ENCODE measurements at regions of chr17 and their contacts with region 1.

Region 1: GRCh38 chr17:56297184-56297583 is 143.9 kb downstream of the ANKFN1 start:
- DNase-seq: peak; percentile 64
- H3K4me3 ChIP-seq: no peak overlapping the region
- H3K27ac ChIP-seq: no peak overlapping the region
- H3K4me1 ChIP-seq: peaks cover 0 to 4% (median under 1%) of the 10 kb centered on the region in 4 donors
- H3K27me3 ChIP-seq: peaks cover 0 to 3% (median 0%) of the 10 kb centered on the region in 4 donors
- CTCF ChIP-seq: no peak
- EP300 ChIP-seq: no peak
- POLR2A ChIP-seq: no peak

Region 2: DNA sequence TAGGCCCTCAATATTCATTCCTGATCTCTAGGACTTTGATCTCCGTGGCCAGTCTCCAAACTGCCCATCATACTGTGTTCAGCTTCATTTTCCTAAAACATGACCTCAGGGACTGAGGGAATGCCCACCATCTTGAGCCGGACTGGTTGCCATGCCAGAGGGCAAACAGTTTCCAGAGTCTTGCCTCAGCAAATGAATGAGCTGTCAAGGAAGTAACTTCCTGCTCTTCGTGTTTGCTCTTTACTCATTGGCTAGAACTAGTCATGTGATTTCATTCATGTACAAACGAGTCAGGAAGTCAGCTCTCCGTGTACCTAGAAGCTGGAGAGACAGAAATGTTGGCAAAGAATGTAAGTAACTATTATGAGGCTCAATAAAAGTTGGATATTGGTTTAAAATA is 93.8 kb before region 1 on chr17:
- intact Hi-C with region 1: no loop called
- DNase-seq: no peak
- H3K4me3 ChIP-seq: no peak overlapping the region
- H3K27ac ChIP-seq: no peak overlapping the region
- H3K4me1 ChIP-seq: no peaks in the 10 kb centered on the region
- H3K27me3 ChIP-seq: no peaks in the 10 kb centered on the region
- CTCF ChIP-seq: no peak
- EP300 ChIP-seq: no peak
- POLR2A ChIP-seq: no peak

Region 3: DNA sequence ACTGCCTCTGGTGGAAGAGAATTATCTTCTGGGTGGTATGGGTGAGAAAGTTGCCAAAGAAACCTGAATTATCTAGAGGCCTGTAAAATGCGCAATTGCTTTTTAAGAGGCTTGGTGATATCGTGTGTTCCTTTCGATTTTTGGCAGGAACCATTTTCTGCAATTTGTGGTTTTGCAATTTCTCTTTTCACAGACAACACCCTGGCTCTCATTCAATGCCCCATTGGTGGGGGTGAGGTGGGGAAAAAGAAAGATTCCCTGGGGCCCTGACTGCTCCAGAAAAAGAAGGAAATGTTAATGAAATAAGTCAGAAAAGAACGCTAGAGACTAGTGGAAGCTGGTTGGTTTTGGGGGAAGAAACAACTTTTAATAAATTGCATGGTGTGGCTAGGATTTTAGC is 66.5 kb before region 1 on chr17:
- intact Hi-C with region 1: loop called (anchors 10 kb)
- DNase-seq: no peak
- H3K4me3 ChIP-seq: no peak overlapping the region
- H3K27ac ChIP-seq: no peak overlapping the region
- H3K4me1 ChIP-seq: peaks cover 0 to under 1% (median under 1%) of the 10 kb centered on the region in 4 donors
- H3K27me3 ChIP-seq: no peaks in the 10 kb centered on the region
- CTCF ChIP-seq: no peak
- EP300 ChIP-seq: no peak
- POLR2A ChIP-seq: no peak

Region 4: GRCh38 chr17:56358651-56359050 is 61.5 kb after region 1 on chr17:
- intact Hi-C with region 1: no loop called
- DNase-seq: no peak
- H3K4me3 ChIP-seq: no peak overlapping the region
- H3K27ac ChIP-seq: no peak overlapping the region
- H3K4me1 ChIP-seq: no peaks in the 10 kb centered on the region
- H3K27me3 ChIP-seq: no peaks in the 10 kb centered on the region
- CTCF ChIP-seq: no peak
- EP300 ChIP-seq: no peak
- POLR2A ChIP-seq: no peak